ENCODE measurements at regions of chr10 and their contacts with region 1.

Region 1: DNA sequence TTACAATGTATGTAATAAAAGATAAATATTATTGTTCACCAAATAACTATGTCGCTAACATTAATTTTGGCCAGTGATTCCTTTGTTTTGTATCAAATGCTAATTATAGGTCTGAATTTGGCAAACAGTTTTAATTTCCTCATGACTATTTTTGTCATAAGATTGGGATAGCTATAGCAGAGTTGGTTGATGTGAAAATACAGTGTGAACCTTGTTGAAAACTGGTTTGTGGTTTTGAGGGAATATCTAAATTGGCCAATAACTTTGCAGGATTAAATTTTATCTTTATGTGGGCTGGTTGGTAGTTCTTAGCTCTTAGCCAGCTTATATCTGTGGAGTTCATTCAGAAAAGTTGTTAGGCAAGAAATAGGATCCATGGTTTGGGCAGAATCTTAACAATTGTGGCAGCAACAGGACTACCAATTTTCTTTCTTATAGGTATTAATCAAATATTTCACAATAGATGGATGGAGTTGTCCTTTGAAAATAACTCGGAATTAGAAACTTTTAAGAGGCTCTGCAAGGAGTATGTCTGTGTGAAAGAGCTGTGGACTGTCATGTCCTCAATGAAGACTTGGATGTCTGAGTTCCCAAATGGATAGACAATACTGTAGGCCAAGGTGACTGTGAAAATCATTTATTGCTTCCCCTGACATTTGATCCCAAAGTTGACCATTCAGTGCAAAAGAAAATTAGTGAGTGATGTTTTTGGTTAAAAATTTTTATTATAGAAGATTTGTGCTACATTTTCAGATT is 73.5 kb downstream of the PRKG1 start:
- DNase-seq: no peak
- ATAC-seq: no peak
- H3K4me3 ChIP-seq: no peak overlapping the region
- H3K27ac ChIP-seq: no peak overlapping the region
- H3K4me1 ChIP-seq: peaks cover 0 to under 1% of the 10 kb centered on the region in 2 donors
- H3K27me3 ChIP-seq: no peaks in the 10 kb centered on the region

Region 2: GRCh38 chr10:51162002-51162401 is 14.2 kb after region 1 on chr10:
- intact Hi-C with region 1: loop called in 1 of 2 experiments (anchors 2 kb)
- DNase-seq: peak; percentile 47 to 51
- ATAC-seq: no peak
- H3K4me3 ChIP-seq: no peak overlapping the region
- H3K27ac ChIP-seq: no peak overlapping the region
- H3K4me1 ChIP-seq: no peaks in the 10 kb centered on the region
- H3K27me3 ChIP-seq: no peaks in the 10 kb centered on the region

Region 3: GRCh38 chr10:51257511-51258248 is 109.9 kb after region 1 on chr10:
- intact Hi-C with region 1: no loop called
- DNase-seq: no peak
- ATAC-seq: peak; percentile 73
- H3K4me3 ChIP-seq: no peak overlapping the region
- H3K27ac ChIP-seq: peak overlapping the region; percentile 68 to 97
- H3K4me1 ChIP-seq: peaks cover 3 to 6% of the 10 kb centered on the region in 2 donors
- H3K27me3 ChIP-seq: no peaks in the 10 kb centered on the region

Region 4: DNA sequence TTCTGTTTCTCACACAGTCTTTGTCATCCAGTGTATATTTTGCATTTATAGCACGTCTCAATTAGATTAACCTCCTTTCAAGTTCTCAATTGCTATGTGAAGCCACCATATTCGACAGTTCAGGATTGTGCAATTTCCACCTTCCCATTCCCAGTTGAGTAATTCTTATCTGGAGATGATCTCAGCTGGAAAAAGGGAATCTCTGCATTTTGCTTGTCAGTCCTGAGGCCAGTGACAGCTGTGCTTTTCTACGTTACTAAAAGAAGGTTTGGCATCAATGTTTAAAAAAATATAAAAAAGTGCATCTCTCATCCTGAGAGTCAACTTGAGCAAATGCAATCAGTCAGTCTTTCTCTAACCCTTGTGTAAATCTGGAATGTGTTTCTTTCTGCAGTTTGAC is 174.2 kb after region 1 on chr10:
- intact Hi-C with region 1: no loop called
- DNase-seq: no peak
- ATAC-seq: no peak
- H3K4me3 ChIP-seq: no peak overlapping the region
- H3K27ac ChIP-seq: no peak overlapping the region
- H3K4me1 ChIP-seq: peaks cover 6 to 9% of the 10 kb centered on the region in 2 donors
- H3K27me3 ChIP-seq: no peaks in the 10 kb centered on the region

Region 5: GRCh38 chr10:51348622-51349021 is 200.8 kb after region 1 on chr10:
- intact Hi-C with region 1: no loop called
- DNase-seq: no peak
- ATAC-seq: no peak
- H3K4me3 ChIP-seq: no peak overlapping the region
- H3K27ac ChIP-seq: no peak overlapping the region
- H3K4me1 ChIP-seq: no peaks in the 10 kb centered on the region
- H3K27me3 ChIP-seq: no peaks in the 10 kb centered on the region

Measured in aorta (tissue), 5 donors.